Tibial artery (tissue), 4 donors: ENCODE measurements at regions of chr13 and their contacts with region 1.

Region 1: GRCh38 chr13:49314344-49314882 is 66.7 kb downstream of the CDADC1 start:
- DNase-seq: no peak
- H3K4me3 ChIP-seq: no peak overlapping the region
- H3K27ac ChIP-seq: peak overlapping the region; percentile 83 to 84
- H3K4me1 ChIP-seq: peaks cover 0 to 48% (median 26%) of the 10 kb centered on the region in 4 donors
- H3K27me3 ChIP-seq: no peaks in the 10 kb centered on the region
- CTCF ChIP-seq: no peak

Region 2: GRCh38 chr13:49367640-49368422 is 53.4 kb after region 1 on chr13:
- intact Hi-C with region 1: loop called (anchors 10 kb)
- DNase-seq: no peak
- H3K4me3 ChIP-seq: peak overlapping the region in 1 of 2 donors; percentile 9
- H3K27ac ChIP-seq: peak overlapping the region; percentile 39 to 59
- H3K4me1 ChIP-seq: peaks cover 0 to 61% (median 27%) of the 10 kb centered on the region in 4 donors
- H3K27me3 ChIP-seq: no peaks in the 10 kb centered on the region
- CTCF ChIP-seq: no peak